Aorta (tissue), 5 donors: ENCODE measurements at regions of chr10 and their contacts with region 1.

Region 1: DNA sequence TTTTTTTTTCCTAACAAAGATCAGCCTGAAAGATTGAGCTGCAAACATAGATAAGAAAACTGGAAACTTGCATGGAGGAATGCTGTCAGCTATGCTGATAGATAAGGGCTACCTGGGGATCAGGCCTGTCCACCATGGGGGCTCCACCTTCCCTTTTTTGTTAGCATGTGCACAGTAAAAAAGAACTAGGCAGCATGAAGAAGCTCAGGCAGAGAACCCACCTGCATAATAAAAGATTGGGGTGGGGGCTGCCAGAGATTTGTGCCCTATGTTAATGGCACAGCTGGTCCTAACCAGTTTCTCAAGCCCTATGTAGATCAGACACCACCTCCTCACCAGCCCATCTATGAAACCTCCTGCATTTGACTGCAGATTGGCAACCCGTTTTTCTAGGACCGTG is 45.4 kb upstream of the CACNB2 start:
- DNase-seq: no peak
- ATAC-seq: no peak
- H3K4me3 ChIP-seq: no peak overlapping the region
- H3K27ac ChIP-seq: no peak overlapping the region
- H3K4me1 ChIP-seq: no peaks in the 10 kb centered on the region
- H3K27me3 ChIP-seq: no peaks in the 10 kb centered on the region

Region 2: GRCh38 chr10:18079665-18080295 is 15.0 kb before region 1 on chr10:
- intact Hi-C with region 1: loop called in 1 of 2 experiments (anchors 1 kb)
- DNase-seq: no peak
- ATAC-seq: no peak
- H3K4me3 ChIP-seq: no peak overlapping the region
- H3K27ac ChIP-seq: no peak overlapping the region
- H3K4me1 ChIP-seq: no peaks in the 10 kb centered on the region
- H3K27me3 ChIP-seq: no peaks in the 10 kb centered on the region

Region 3: GRCh38 chr10:18195060-18195799 is 100.4 kb after region 1 on chr10:
- intact Hi-C with region 1: no loop called
- DNase-seq: no peak
- ATAC-seq: no peak
- H3K4me3 ChIP-seq: no peak overlapping the region
- H3K27ac ChIP-seq: no peak overlapping the region
- H3K4me1 ChIP-seq: peaks cover 4 to 6% of the 10 kb centered on the region in 2 donors
- H3K27me3 ChIP-seq: no peaks in the 10 kb centered on the region